CD4-positive, alpha-beta memory T cell (primary cell): ENCODE measurements at regions of chr11 and their contacts with region 1.

Region 1: GRCh38 chr11:61129639-61130523 is 27.6 kb downstream of the CD5 start:
- DNase-seq: peak; percentile 87 to 91 (median 89)
- H3K4me3 ChIP-seq: peak overlapping the region in 1 of 2 donors; percentile 10
- H3K4me3 Mint-ChIP-seq: peak overlapping the region in 7 of 8 donors; percentile 3 to 66 (median 53)
- H3K27ac ChIP-seq: peak overlapping the region; percentile 19
- H3K27ac Mint-ChIP-seq: peak overlapping the region; percentile 14 to 87 (median 53)
- H3K4me1 ChIP-seq: peaks cover 18% of the 10 kb centered on the region
- H3K4me1 Mint-ChIP-seq: peaks cover 11 to 37% (median 16%) of the 10 kb centered on the region in 4 donors
- H3K27me3 ChIP-seq: no peaks in the 10 kb centered on the region
- H3K27me3 Mint-ChIP-seq: no peaks in the 10 kb centered on the region

Region 2: DNA sequence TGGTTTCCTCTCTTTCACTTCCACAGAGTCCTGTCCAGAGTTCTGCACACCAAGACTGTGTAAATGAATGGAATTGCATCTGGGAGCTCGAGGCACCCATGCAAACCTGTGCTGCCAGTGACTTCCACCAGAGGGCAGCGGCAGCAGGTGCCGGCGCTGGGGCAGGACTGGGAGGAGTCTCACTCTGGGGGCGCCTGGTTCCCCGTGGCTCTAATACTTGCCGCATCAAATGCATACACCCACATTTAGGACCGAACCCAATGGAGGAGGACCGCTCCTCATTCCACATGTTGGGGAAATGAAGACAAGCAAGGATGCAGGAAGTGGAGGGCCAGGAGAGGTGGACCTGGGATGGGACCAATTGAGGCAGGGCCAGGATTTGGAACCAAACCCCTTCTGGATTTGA is 159.5 kb before region 1 on chr11:
- CTCF ChIA-PET with region 1: interaction called, 6 read pairs
- POLR2A ChIA-PET with region 1: interaction called, 11 read pairs
- intact Hi-C with region 1: loop called (anchors 1 kb)
- DNase-seq: peak; percentile 78 to 82 (median 80)
- H3K4me3 ChIP-seq: peak overlapping the region; percentile 38 to 92
- H3K4me3 Mint-ChIP-seq: peak overlapping the region; percentile 93 to 98 (median 96)
- H3K27ac ChIP-seq: peak overlapping the region; percentile 92
- H3K27ac Mint-ChIP-seq: peak overlapping the region; percentile 88 to 98 (median 96)
- H3K4me1 ChIP-seq: peaks cover 23% of the 10 kb centered on the region
- H3K4me1 Mint-ChIP-seq: peaks cover 18 to 38% (median 24%) of the 10 kb centered on the region in 4 donors
- H3K27me3 ChIP-seq: no peaks in the 10 kb centered on the region
- H3K27me3 Mint-ChIP-seq: peaks cover 0 to 1% of the 10 kb centered on the region in 2 donors

Region 3: DNA sequence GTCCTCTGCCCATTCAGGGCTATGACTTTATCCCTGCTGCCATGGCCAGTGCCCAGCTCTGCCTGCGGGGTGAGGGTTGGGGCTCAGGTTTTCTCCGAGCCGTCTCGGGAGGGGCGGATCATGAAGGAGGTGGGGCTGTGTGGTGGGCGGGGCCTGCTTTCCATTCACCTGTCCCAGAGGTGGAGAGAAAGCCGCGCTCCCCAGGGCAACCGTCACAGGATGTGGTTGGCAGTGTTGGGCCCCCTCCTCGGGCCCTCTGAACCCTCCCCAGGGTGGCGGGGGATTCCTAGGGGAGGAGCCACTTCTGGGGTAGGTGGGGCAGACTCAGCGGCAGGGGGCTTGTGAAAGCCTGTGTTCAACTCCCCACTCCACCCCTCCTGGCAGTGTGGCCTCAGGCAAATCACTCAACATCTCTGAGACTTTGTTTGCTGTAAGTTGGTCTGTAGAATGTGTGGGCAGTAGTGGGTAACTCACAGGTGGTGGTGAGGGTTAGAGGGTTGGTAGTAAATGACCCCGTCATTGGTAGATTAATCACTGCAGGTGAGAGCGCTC is 108.1 kb before region 1 on chr11:
- CTCF ChIA-PET with region 1: interaction called, 4 read pairs
- POLR2A ChIA-PET with region 1: interaction called, 14 read pairs
- intact Hi-C with region 1: loop called (anchors 2 kb)
- DNase-seq: peak; percentile 92 to 99 (median 94)
- H3K4me3 ChIP-seq: peak overlapping the region; percentile 40 to 41
- H3K4me3 Mint-ChIP-seq: peak overlapping the region; percentile 60 to 81 (median 72)
- H3K27ac ChIP-seq: peak overlapping the region; percentile 83
- H3K27ac Mint-ChIP-seq: peak overlapping the region; percentile 97 to 100 (median 99)
- H3K4me1 ChIP-seq: peaks cover 76% of the 10 kb centered on the region
- H3K4me1 Mint-ChIP-seq: peaks cover 60 to 85% (median 71%) of the 10 kb centered on the region in 4 donors
- H3K27me3 ChIP-seq: no peaks in the 10 kb centered on the region
- H3K27me3 Mint-ChIP-seq: no peaks in the 10 kb centered on the region

Region 4: GRCh38 chr11:61083601-61084147 is 46.2 kb before region 1 on chr11:
- CTCF ChIA-PET with region 1: interaction called, 23 read pairs
- POLR2A ChIA-PET with region 1: interaction called, 73 read pairs
- intact Hi-C with region 1: loop called (anchors 2 kb)
- DNase-seq: peak; percentile 80 to 91 (median 82)
- H3K4me3 ChIP-seq: peak overlapping the region in 1 of 2 donors; percentile 19
- H3K4me3 Mint-ChIP-seq: peak overlapping the region; percentile 75 to 90 (median 86)
- H3K27ac ChIP-seq: peak overlapping the region; percentile 91
- H3K27ac Mint-ChIP-seq: peak overlapping the region; percentile 94 to 100 (median 99)
- H3K4me1 ChIP-seq: peaks cover 55% of the 10 kb centered on the region
- H3K4me1 Mint-ChIP-seq: peaks cover 42 to 65% (median 50%) of the 10 kb centered on the region in 4 donors
- H3K27me3 ChIP-seq: no peaks in the 10 kb centered on the region
- H3K27me3 Mint-ChIP-seq: no peaks in the 10 kb centered on the region

Region 5: DNA sequence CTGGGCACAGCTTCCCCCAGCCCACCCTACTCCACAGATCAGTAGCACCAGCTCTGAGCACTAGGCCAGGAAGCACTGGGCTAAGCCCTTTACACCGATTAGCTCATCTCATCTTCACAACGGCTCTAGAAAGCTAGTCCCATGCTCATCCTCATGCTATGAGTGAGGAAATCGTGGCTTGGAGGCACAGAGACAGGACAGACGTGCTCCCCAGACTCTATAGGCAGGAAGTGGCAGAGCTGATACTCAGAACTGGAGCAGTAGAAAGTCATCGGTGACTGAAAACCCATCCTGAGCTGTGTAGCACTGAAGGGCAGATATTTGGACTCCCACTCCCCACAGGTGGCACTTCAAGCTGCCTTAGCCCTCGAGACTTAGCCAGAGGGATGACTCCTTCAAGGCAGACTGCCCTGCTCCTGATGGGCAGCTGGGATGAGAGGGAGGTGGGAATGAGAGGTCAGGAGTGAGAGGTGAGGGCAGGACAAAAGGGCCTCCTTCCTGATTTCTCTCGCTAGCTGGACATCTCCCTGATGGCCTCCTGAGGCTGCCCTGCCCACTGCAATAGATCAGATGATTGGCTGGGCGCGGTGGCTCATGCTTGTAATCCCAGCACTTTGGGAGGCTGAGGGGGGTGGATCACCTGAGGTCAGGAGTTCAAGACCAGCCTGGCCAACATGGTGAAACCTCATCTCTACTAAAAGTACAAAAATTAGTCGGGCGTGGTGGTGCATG is 17.9 kb before region 1 on chr11:
- CTCF ChIA-PET with region 1: interaction called, 34 read pairs
- POLR2A ChIA-PET with region 1: interaction called, 117 read pairs
- intact Hi-C with region 1: loop called (anchors 2 kb)
- DNase-seq: peak; percentile 64 to 87 (median 72)
- H3K4me3 ChIP-seq: peak overlapping the region in 1 of 2 donors; percentile 20
- H3K4me3 Mint-ChIP-seq: peak overlapping the region in 5 of 8 donors; percentile 37 to 83 (median 75)
- H3K27ac ChIP-seq: peak overlapping the region; percentile 100
- H3K27ac Mint-ChIP-seq: peak overlapping the region in 5 of 7 donors; percentile 78 to 98 (median 89)
- H3K4me1 ChIP-seq: peaks cover 100% of the 10 kb centered on the region
- H3K4me1 Mint-ChIP-seq: peaks cover 0 to 100% (median 82%) of the 10 kb centered on the region in 4 donors
- H3K27me3 ChIP-seq: no peaks in the 10 kb centered on the region
- H3K27me3 Mint-ChIP-seq: no peaks in the 10 kb centered on the region